HepG2 (cell line): ENCODE measurements at regions of chr22 and their contacts with region 1.

Region 1: GRCh38 chr22:24091551-24092420 is 80.7 kb downstream of the CABIN1 start:
- DNase-seq: no peak
- ATAC-seq: no peak
- H3K4me3 ChIP-seq: no peak overlapping the region
- H3K27ac ChIP-seq: peak overlapping the region; percentile 59
- H3K4me1 ChIP-seq: peaks cover 20% of the 10 kb centered on the region
- H3K27me3 ChIP-seq: no peaks in the 10 kb centered on the region
- CTCF ChIP-seq: no peak
- EP300 ChIP-seq: no peak
- POLR2A ChIP-seq: no peak
- RAD21 ChIP-seq: no peak

Region 2: GRCh38 chr22:24037851-24038765 is 53.7 kb before region 1 on chr22:
- CTCF ChIA-PET with region 1: no interaction called
- POLR2A ChIA-PET with region 1: no interaction called
- in situ Hi-C with region 1: no loop called
- intact Hi-C with region 1: no loop called
- DNase-seq: no peak
- ATAC-seq: no peak
- H3K4me3 ChIP-seq: no peak overlapping the region
- H3K27ac ChIP-seq: no peak overlapping the region
- H3K4me1 ChIP-seq: peaks cover 23% of the 10 kb centered on the region
- H3K27me3 ChIP-seq: no peaks in the 10 kb centered on the region
- CTCF ChIP-seq: no peak
- EP300 ChIP-seq: no peak
- POLR2A ChIP-seq: no peak
- RAD21 ChIP-seq: no peak

Region 3: GRCh38 chr22:24146194-24146616 is 54.4 kb after region 1 on chr22:
- CTCF ChIA-PET with region 1: no interaction called
- POLR2A ChIA-PET with region 1: no interaction called
- in situ Hi-C with region 1: no loop called
- intact Hi-C with region 1: loop called (anchors 10 kb)
- DNase-seq: peak; percentile 80
- ATAC-seq: peak; percentile 97
- H3K4me3 ChIP-seq: peak overlapping the region in 1 of 3 experiments; percentile 22; a peak in 1 of 6 replicates
- H3K27ac ChIP-seq: peak overlapping the region; percentile 67
- H3K4me1 ChIP-seq: peaks cover 46% of the 10 kb centered on the region
- H3K27me3 ChIP-seq: no peaks in the 10 kb centered on the region; a peak in 1 of 5 replicates
- CTCF ChIP-seq: peak; percentile 38; the same call in 1 of the 2 replicates
- EP300 ChIP-seq: no peak
- POLR2A ChIP-seq: no peak
- RAD21 ChIP-seq: no peak

Region 4: GRCh38 chr22:24338726-24339451 is 247.1 kb after region 1 on chr22:
- CTCF ChIA-PET with region 1: no interaction called
- POLR2A ChIA-PET with region 1: no interaction called
- in situ Hi-C with region 1: no loop called
- intact Hi-C with region 1: no loop called
- DNase-seq: no peak
- ATAC-seq: no peak
- H3K4me3 ChIP-seq: no peak overlapping the region
- H3K27ac ChIP-seq: no peak overlapping the region
- H3K4me1 ChIP-seq: no peaks in the 10 kb centered on the region
- H3K27me3 ChIP-seq: no peaks in the 10 kb centered on the region
- CTCF ChIP-seq: no peak
- EP300 ChIP-seq: no peak
- POLR2A ChIP-seq: no peak
- RAD21 ChIP-seq: no peak